ENCODE measurements at regions of chr13 and their contacts with region 1.

Region 1: DNA sequence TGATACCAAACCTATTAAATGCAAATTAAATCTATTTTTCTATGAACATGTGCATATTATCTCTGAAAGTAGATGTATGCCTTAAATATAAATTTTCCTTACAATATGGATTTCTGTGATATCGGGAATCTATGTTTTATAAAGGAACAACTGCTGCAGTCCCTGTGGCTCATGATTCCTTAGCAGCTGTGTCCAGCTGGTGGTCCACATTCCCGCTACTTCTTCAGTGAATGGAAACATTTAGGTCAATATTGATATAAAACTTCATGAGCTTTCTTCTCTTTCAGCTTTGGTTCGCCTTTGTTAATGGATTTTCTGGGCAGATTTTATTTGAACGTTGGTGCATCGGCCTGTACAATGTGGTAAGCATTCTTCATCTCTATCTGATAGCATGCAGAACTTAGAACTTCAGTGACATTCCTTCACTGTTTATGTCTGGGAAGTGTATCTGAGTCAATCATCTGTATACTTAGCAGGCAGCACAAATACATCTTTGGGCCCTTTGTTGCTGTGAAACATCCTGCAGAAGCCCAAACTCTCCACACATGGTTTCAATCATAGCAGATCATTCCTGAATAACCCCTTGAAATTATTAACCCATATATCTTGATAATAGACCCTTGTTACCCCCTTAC is 223.9 kb downstream of the SHISA2 start:
- DNase-seq: no peak
- ATAC-seq: no peak
- H3K4me3 ChIP-seq: no peak overlapping the region
- H3K4me3 Mint-ChIP-seq: no peak overlapping the region
- H3K27ac ChIP-seq: no peak overlapping the region
- H3K27ac Mint-ChIP-seq: no peak overlapping the region
- H3K4me1 ChIP-seq: no peaks in the 10 kb centered on the region
- H3K4me1 Mint-ChIP-seq: no peaks in the 10 kb centered on the region
- H3K27me3 ChIP-seq: no peaks in the 10 kb centered on the region
- H3K27me3 Mint-ChIP-seq: peaks cover 5 to 26% of the 10 kb centered on the region in 2 donors
- CTCF ChIP-seq: no peak

Region 2: GRCh38 chr13:26062844-26063444 is 235.0 kb after region 1 on chr13:
- intact Hi-C with region 1: loop called (anchors 1 kb)
- DNase-seq: peak in 1 of 2 donors; percentile 78
- ATAC-seq: peak in 2 of 3 donors; percentile 38 to 51
- H3K4me3 ChIP-seq: no peak overlapping the region
- H3K4me3 Mint-ChIP-seq: no peak overlapping the region
- H3K27ac ChIP-seq: no peak overlapping the region
- H3K27ac Mint-ChIP-seq: no peak overlapping the region
- H3K4me1 ChIP-seq: no peaks in the 10 kb centered on the region
- H3K4me1 Mint-ChIP-seq: no peaks in the 10 kb centered on the region
- H3K27me3 ChIP-seq: peaks cover 4% of the 10 kb centered on the region
- H3K27me3 Mint-ChIP-seq: peaks cover 5 to 44% of the 10 kb centered on the region in 2 donors
- CTCF ChIP-seq: peak; percentile 49

Region 3: GRCh38 chr13:26132756-26133155 is 304.8 kb after region 1 on chr13:
- intact Hi-C with region 1: no loop called
- DNase-seq: peak in 1 of 2 donors; percentile 6
- ATAC-seq: no peak
- H3K4me3 ChIP-seq: no peak overlapping the region
- H3K4me3 Mint-ChIP-seq: no peak overlapping the region
- H3K27ac ChIP-seq: no peak overlapping the region
- H3K27ac Mint-ChIP-seq: no peak overlapping the region
- H3K4me1 ChIP-seq: no peaks in the 10 kb centered on the region
- H3K4me1 Mint-ChIP-seq: no peaks in the 10 kb centered on the region
- H3K27me3 ChIP-seq: no peaks in the 10 kb centered on the region
- H3K27me3 Mint-ChIP-seq: peaks cover 6 to 7% of the 10 kb centered on the region in 2 donors
- CTCF ChIP-seq: no peak

Measured in natural killer cell (primary cell).